ENCODE measurements at regions of chr3 and their contacts with region 1.

Region 1: GRCh38 chr3:192423003-192423349 is 304.4 kb downstream of the FGF12 start:
- DNase-seq: no peak
- H3K4me3 Mint-ChIP-seq: no peak overlapping the region
- H3K27ac Mint-ChIP-seq: no peak overlapping the region
- H3K4me1 Mint-ChIP-seq: no peaks in the 10 kb centered on the region
- H3K27me3 Mint-ChIP-seq: peaks cover 3% of the 10 kb centered on the region

Region 2: GRCh38 chr3:191425322-191425734 is 997.6 kb before region 1 on chr3:
- intact Hi-C with region 1: loop called (anchors 10 kb)
- DNase-seq: no peak
- H3K4me3 Mint-ChIP-seq: no peak overlapping the region
- H3K27ac Mint-ChIP-seq: no peak overlapping the region
- H3K4me1 Mint-ChIP-seq: no peaks in the 10 kb centered on the region
- H3K27me3 Mint-ChIP-seq: no peaks in the 10 kb centered on the region

Region 3: GRCh38 chr3:192188218-192188835 is 234.6 kb before region 1 on chr3:
- intact Hi-C with region 1: loop called (anchors 5 kb)
- DNase-seq: peak; percentile 80
- H3K4me3 Mint-ChIP-seq: no peak overlapping the region
- H3K27ac Mint-ChIP-seq: no peak overlapping the region
- H3K4me1 Mint-ChIP-seq: no peaks in the 10 kb centered on the region
- H3K27me3 Mint-ChIP-seq: no peaks in the 10 kb centered on the region

Measured in activated CD4-positive, alpha-beta T cell treated with anti-CD3 and anti-CD28 coated beads, Interleukin-2, amount 10 ng/mL, durations not matched to agents 24 days and 14 days (primary cell).